ENCODE measurements at regions of chr6 and their contacts with region 1.

Region 1: DNA sequence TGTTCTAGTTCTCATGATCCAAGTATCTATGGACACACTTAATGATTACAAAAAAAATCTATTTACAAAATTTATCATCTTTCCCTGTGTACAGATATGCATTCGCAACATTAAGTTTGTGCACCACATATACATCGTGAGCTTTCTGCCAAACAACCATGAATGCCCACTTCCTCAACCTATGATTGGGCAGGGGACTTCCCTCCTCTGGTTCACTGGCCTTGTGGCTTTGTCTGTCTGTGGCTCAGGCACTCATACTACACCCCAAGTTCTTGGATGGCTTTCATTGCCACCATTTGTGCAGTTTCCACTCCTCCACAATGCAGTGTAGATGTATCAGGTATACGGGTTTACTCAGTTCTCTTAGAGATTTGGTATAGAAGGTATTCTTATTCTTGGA is 74.9 kb downstream of the HS3ST5 start:
- DNase-seq: no peak
- H3K4me3 ChIP-seq: no peak overlapping the region
- H3K27ac ChIP-seq: no peak overlapping the region
- H3K4me1 ChIP-seq: peaks cover 0 to 3% of the 10 kb centered on the region in 2 experiments; a peak in 2 of 4 replicates
- H3K27me3 ChIP-seq: no peaks in the 10 kb centered on the region
- CTCF ChIP-seq: no peak
- EP300 ChIP-seq: no peak
- RAD21 ChIP-seq: no peak

Region 2: DNA sequence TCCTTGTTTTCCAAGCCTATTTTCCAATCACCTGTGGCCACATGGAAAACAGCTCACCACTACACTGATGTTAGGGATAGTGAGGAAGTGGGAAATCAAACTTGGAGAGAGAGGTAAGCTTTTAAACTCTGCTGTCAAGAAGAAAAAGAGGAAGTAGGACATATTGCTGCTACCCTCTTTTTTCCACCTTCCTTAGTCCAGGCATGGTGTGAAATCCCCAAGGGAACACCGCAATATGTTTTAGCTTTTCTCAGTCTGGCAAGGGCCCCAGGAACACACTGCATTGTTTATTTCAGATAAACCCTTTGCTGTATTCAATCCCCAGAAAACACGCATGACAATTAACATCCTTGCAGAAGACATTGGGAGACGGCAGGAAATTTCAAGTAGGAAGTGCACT is 13.6 kb after region 1 on chr6:
- CTCF ChIA-PET with region 1: interaction called, 12 read pairs
- POLR2A ChIA-PET with region 1: no interaction called
- DNase-seq: no peak
- H3K4me3 ChIP-seq: no peak overlapping the region
- H3K27ac ChIP-seq: no peak overlapping the region
- H3K4me1 ChIP-seq: no peaks in the 10 kb centered on the region; a peak in 1 of 4 replicates
- H3K27me3 ChIP-seq: no peaks in the 10 kb centered on the region
- CTCF ChIP-seq: no peak
- EP300 ChIP-seq: no peak
- RAD21 ChIP-seq: no peak

Measured in SK-N-SH (cell line).